ENCODE measurements at regions of chr5 and their contacts with region 1.

Region 1: GRCh38 chr5:61200582-61201155 is 38.4 kb upstream of the SMIM15 start:
- DNase-seq: peak; percentile 51
- ATAC-seq: peak; percentile 83
- H3K4me3 ChIP-seq: no peak overlapping the region
- H3K27ac ChIP-seq: peak overlapping the region; percentile 28; the same call in 1 of the 2 replicates
- H3K4me1 ChIP-seq: peaks cover 2% of the 10 kb centered on the region; the same call in 1 of the 2 replicates
- H3K27me3 ChIP-seq: no peaks in the 10 kb centered on the region
- CTCF ChIP-seq: no peak
- EP300 ChIP-seq: peak in 1 of 2 experiments; percentile 48; a peak in 2 of 4 replicates
- POLR2A ChIP-seq: no peak
- RAD21 ChIP-seq: no peak

Region 2: DNA sequence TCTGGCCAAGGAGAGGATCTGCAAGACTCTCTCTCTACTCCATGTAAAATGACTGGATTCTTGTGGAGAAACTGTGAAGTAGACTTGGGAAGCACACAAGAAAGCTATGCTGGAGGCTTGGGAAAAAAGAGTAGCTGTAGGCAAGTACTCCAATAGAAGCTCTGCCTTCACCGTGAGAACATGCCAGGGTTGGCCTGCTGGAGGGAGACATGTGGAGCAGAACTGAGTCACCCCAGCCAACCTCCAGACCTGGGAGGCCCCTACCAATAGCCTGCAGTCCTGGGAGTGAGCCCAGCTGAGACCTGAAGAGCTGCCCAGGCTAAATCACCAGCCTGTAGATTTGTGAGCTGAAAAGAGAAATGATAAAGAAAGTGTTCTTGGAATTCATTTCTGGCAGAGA is 567.3 kb before region 1 on chr5:
- CTCF ChIA-PET with region 1: no interaction called
- POLR2A ChIA-PET with region 1: no interaction called
- RAD21 ChIA-PET with region 1: no interaction called
- SMC1A ChIA-PET with region 1: no interaction called
- in situ Hi-C with region 1: no loop called
- intact Hi-C with region 1: no loop called
- DNase-seq: no peak
- ATAC-seq: no peak
- H3K4me3 ChIP-seq: no peak overlapping the region
- H3K27ac ChIP-seq: no peak overlapping the region
- H3K4me1 ChIP-seq: no peaks in the 10 kb centered on the region
- H3K27me3 ChIP-seq: no peaks in the 10 kb centered on the region
- CTCF ChIP-seq: no peak
- EP300 ChIP-seq: no peak
- POLR2A ChIP-seq: no peak
- RAD21 ChIP-seq: no peak

Region 3: GRCh38 chr5:61162010-61162831 is 38.4 kb before region 1 on chr5 and contains the start of gene SMIM15:
- CTCF ChIA-PET with region 1: interaction called, 4 read pairs
- POLR2A ChIA-PET with region 1: interaction called, 5 read pairs
- RAD21 ChIA-PET with region 1: interaction called, 14 read pairs
- SMC1A ChIA-PET with region 1: interaction called, 24 read pairs
- in situ Hi-C with region 1: no loop called
- intact Hi-C with region 1: loop called (anchors 1 kb)
- DNase-seq: peak; percentile 54
- ATAC-seq: peak; percentile 94
- H3K4me3 ChIP-seq: peak within 1 kb of the TSS; percentile 73
- H3K27ac ChIP-seq: peak within 1 kb of the TSS; percentile 98
- H3K4me1 ChIP-seq: no peaks in the 10 kb centered on the region; the same call in 1 of the 2 replicates
- H3K27me3 ChIP-seq: no peaks in the 10 kb centered on the region
- CTCF ChIP-seq: no peak
- EP300 ChIP-seq: no peak
- POLR2A ChIP-seq: peak; percentile 99
- RAD21 ChIP-seq: no peak
- polyA plus RNA-seq, gene SMIM15: 13.8 to 18.7 TPM

Region 4: DNA sequence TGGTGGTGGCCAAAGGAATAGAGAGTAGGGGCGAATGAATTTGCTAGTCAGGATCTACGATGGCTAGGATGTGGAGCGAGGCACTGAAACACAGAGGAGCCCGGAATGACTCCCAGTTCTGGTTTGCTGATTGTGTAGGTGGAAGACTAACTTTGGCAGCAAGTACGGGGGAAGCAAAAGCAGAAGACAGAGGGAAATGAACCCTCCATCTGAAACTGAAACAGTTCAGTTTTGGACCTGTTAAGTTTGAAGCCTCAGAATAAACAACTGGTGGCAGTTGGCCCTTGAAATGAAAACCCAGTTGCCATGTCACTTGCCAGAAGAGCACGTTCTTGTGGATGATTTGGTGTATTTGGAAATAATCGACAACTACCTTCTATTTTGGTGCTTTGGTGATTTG is 23.0 kb before region 1 on chr5:
- CTCF ChIA-PET with region 1: interaction called, 11 read pairs
- POLR2A ChIA-PET with region 1: interaction called, 4 read pairs
- RAD21 ChIA-PET with region 1: interaction called, 19 read pairs
- SMC1A ChIA-PET with region 1: interaction called, 34 read pairs
- in situ Hi-C with region 1: no loop called
- intact Hi-C with region 1: no loop called
- DNase-seq: no peak
- ATAC-seq: peak; percentile 91
- H3K4me3 ChIP-seq: no peak overlapping the region
- H3K27ac ChIP-seq: no peak overlapping the region
- H3K4me1 ChIP-seq: peaks cover 10% of the 10 kb centered on the region
- H3K27me3 ChIP-seq: no peaks in the 10 kb centered on the region
- CTCF ChIP-seq: no peak
- EP300 ChIP-seq: no peak
- POLR2A ChIP-seq: no peak
- RAD21 ChIP-seq: no peak

Region 5: DNA sequence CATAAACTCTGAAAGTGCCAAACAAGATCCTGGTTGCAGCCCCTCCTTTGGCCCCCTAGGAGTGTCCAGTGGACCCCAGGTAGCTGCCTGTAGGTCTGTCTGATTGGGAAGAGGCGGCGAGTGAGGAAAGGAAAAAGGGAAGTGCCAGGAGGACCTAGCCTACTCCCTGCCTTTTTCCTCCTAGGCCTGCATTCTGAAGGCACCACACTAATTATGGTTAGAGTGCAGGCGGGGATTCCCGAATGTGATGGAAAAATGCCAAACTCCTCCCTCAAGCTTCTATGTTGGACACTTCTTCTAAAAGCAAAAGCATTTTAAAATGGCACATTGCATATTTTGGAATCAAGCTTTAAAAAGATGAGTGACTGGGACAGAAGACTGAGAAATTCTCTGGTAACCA is 44.8 kb after region 1 on chr5:
- CTCF ChIA-PET with region 1: no interaction called
- POLR2A ChIA-PET with region 1: no interaction called
- RAD21 ChIA-PET with region 1: no interaction called
- SMC1A ChIA-PET with region 1: no interaction called
- in situ Hi-C with region 1: no loop called
- intact Hi-C with region 1: no loop called
- DNase-seq: no peak
- ATAC-seq: peak; percentile 24; the same call in 1 of the 3 replicates
- H3K4me3 ChIP-seq: no peak overlapping the region
- H3K27ac ChIP-seq: no peak overlapping the region
- H3K4me1 ChIP-seq: no peaks in the 10 kb centered on the region
- H3K27me3 ChIP-seq: no peaks in the 10 kb centered on the region
- CTCF ChIP-seq: no peak
- EP300 ChIP-seq: no peak
- POLR2A ChIP-seq: no peak
- RAD21 ChIP-seq: no peak

Region 6: DNA sequence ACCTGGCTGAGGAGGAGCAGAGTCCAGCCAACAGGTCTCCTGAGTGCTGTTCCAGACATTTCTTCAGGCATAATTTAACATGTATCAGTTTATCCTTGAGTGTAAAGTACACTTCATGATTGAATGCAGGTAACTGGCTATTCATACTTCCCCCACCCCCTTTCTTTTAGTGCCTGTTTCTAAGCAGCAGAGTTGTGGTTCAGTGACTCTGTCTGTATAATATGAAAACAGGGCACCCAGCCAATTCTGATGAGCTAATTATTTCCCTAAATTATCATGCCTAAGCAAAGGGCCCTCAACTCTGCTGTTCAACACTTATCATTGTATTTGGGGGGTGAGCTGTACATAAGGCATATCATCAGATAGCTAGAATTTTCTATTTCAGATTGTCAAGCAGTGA is 79.5 kb after region 1 on chr5:
- CTCF ChIA-PET with region 1: interaction called, 4 read pairs
- POLR2A ChIA-PET with region 1: interaction called, 3 read pairs
- RAD21 ChIA-PET with region 1: interaction called, 10 read pairs
- SMC1A ChIA-PET with region 1: interaction called, 14 read pairs
- in situ Hi-C with region 1: no loop called
- intact Hi-C with region 1: no loop called
- DNase-seq: no peak
- ATAC-seq: peak; percentile 79
- H3K4me3 ChIP-seq: no peak overlapping the region
- H3K27ac ChIP-seq: no peak overlapping the region
- H3K4me1 ChIP-seq: peaks cover 5% of the 10 kb centered on the region; the same call in 1 of the 2 replicates
- H3K27me3 ChIP-seq: no peaks in the 10 kb centered on the region
- CTCF ChIP-seq: no peak
- EP300 ChIP-seq: no peak
- POLR2A ChIP-seq: no peak
- RAD21 ChIP-seq: no peak

Region 7: GRCh38 chr5:61319388-61320146 is 118.9 kb after region 1 on chr5:
- CTCF ChIA-PET with region 1: interaction called, 10 read pairs
- POLR2A ChIA-PET with region 1: interaction called, 3 read pairs
- RAD21 ChIA-PET with region 1: interaction called, 13 read pairs
- SMC1A ChIA-PET with region 1: interaction called, 14 read pairs
- in situ Hi-C with region 1: no loop called
- intact Hi-C with region 1: no loop called
- DNase-seq: peak; percentile 88
- ATAC-seq: peak; percentile 99
- H3K4me3 ChIP-seq: peak overlapping the region; percentile 42; the same call in 1 of the 2 replicates
- H3K27ac ChIP-seq: peak overlapping the region; percentile 61
- H3K4me1 ChIP-seq: peaks cover 26% of the 10 kb centered on the region
- H3K27me3 ChIP-seq: 0 out of 4 replicates have a peak, but pooled peaks cover 0 to 5% of the 10 kb centered on the region in 2 experiments
- CTCF ChIP-seq: no peak
- EP300 ChIP-seq: peak; percentile 80 to 83; a peak in 3 of 4 replicates
- POLR2A ChIP-seq: no peak
- RAD21 ChIP-seq: peak; percentile 31; the same call in 1 of the 2 replicates